Endothelial cell of umbilical vein (primary cell): ENCODE measurements at regions of chr14 and their contacts with region 1.

Region 1: DNA sequence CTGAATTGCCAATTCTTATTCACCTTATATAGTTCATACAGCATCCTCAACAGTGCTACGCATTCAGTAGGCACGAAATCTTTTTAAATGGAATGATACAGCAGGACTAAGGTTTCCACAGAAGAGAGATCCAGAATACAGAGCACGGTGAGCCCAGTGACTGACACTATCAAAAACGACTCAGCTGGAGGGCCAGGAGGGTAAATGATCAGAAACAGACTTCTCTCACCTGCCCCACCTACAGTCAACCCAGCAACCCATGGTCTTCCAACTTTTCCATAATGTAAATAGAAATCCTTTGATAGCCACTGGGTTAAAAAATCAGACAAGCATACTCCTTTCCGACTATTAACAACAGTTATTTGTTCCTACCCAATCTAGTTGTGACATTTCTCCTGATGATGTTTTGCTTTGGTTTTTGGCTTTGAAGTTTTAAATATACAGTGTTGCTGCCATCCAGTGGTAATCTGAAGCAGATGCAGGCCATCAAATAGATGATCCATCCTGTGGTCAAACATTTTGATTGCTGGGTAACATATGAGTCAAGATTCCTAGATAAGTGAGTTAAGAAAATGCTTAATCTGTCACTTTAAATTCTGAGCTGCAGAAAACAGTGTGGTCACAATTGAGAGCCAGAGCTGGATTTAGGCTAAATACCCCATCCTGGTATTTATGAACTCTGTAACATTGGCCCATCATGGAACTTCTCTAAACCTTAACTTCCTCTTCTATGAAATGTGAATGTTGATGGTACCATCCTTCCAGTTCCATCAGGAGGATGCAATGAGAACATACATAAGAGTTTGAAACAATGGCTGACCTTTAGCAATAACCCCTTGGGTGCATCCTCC is 42.0 kb downstream of the GPHB5 start:
- DNase-seq: peak; percentile 64
- H3K4me3 ChIP-seq: no peak overlapping the region
- H3K27ac ChIP-seq: no peak overlapping the region
- H3K4me1 ChIP-seq: peaks cover 3% of the 10 kb centered on the region
- H3K27me3 ChIP-seq: no peaks in the 10 kb centered on the region
- CTCF ChIP-seq: peak; percentile 56 to 63
- POLR2A ChIP-seq: no peak

Region 2: GRCh38 chr14:63044994-63045611 is 231.6 kb before region 1 on chr14 and contains the start of gene KCNH5:
- CTCF ChIA-PET with region 1: interaction called, 4 read pairs
- POLR2A ChIA-PET with region 1: no interaction called
- dilution Hi-C with region 1: no loop called
- intact Hi-C with region 1: loop called (anchors 5 kb)
- DNase-seq: peak; percentile 50
- H3K4me3 ChIP-seq: no peak within 1 kb of the TSS
- H3K27ac ChIP-seq: no peak within 1 kb of the TSS
- H3K4me1 ChIP-seq: peaks cover 1% of the 10 kb centered on the region
- H3K27me3 ChIP-seq: peaks cover 52 to 79% of the 10 kb centered on the region in 2 experiments
- CTCF ChIP-seq: no peak
- POLR2A ChIP-seq: no peak
- total RNA-seq, gene KCNH5: not detected in 2 replicates

Region 3: DNA sequence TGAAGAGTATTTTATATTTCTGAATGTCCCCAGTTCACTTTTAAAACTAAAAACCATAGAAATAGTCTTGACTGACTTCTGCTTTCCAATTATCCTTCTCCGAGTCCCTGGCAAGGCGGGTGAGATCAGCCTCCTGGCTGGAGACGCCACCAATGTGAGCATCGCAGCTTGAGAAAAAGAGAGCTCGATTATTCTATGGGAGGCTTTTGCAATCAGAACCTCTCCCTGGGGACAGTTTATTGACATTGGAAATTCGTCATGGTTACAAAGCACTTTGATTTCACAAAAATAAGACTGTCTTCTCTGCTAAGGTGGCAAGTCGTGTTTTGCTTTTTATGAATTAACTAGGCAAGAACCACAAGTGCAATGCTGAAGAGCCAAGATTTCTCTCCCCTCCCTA is 65.7 kb after region 1 on chr14:
- CTCF ChIA-PET with region 1: no interaction called
- POLR2A ChIA-PET with region 1: no interaction called
- dilution Hi-C with region 1: no loop called
- intact Hi-C with region 1: no loop called
- DNase-seq: no peak
- H3K4me3 ChIP-seq: no peak overlapping the region
- H3K27ac ChIP-seq: no peak overlapping the region
- H3K4me1 ChIP-seq: peaks cover 13% of the 10 kb centered on the region
- H3K27me3 ChIP-seq: peaks cover 8 to 14% of the 10 kb centered on the region in 2 experiments
- CTCF ChIP-seq: no peak
- POLR2A ChIP-seq: no peak